Posterior cingulate gyrus (tissue), 11 donors: ENCODE measurements at regions of chr3 and their contacts with region 1.

Region 1: GRCh38 chr3:186209810-186210752 is 101.2 kb upstream of the ETV5 start:
- DNase-seq: peak; percentile 73 to 98 (median 83)

Region 2: GRCh38 chr3:186108941-186109865 is 100.9 kb before region 1 on chr3 and contains the start of gene ETV5:
- intact Hi-C with region 1: loop called (anchors 2 kb)
- DNase-seq: peak; percentile 99 to 100 (median 100)